PC-9 (cell line): ENCODE measurements at regions of chr12 and their contacts with region 1.

Region 1: GRCh38 chr12:59650402-59651228 is 54.8 kb downstream of the SLC16A7 start:
- DNase-seq: no peak
- H3K4me3 ChIP-seq: no peak overlapping the region
- H3K27ac ChIP-seq: no peak overlapping the region
- H3K4me1 ChIP-seq: no peaks in the 10 kb centered on the region; the same call in 1 of the 2 replicates
- H3K27me3 ChIP-seq: no peaks in the 10 kb centered on the region
- CTCF ChIP-seq: no peak

Region 2: GRCh38 chr12:57983146-57983857 is 1667.3 kb before region 1 on chr12:
- CTCF ChIA-PET with region 1: no interaction called
- POLR2A ChIA-PET with region 1: no interaction called
- intact Hi-C with region 1: no loop called
- DNase-seq: peak; percentile 44 to 48
- H3K4me3 ChIP-seq: no peak overlapping the region
- H3K27ac ChIP-seq: no peak overlapping the region
- H3K4me1 ChIP-seq: no peaks in the 10 kb centered on the region
- H3K27me3 ChIP-seq: no peaks in the 10 kb centered on the region
- CTCF ChIP-seq: peak; percentile 90

Region 3: DNA sequence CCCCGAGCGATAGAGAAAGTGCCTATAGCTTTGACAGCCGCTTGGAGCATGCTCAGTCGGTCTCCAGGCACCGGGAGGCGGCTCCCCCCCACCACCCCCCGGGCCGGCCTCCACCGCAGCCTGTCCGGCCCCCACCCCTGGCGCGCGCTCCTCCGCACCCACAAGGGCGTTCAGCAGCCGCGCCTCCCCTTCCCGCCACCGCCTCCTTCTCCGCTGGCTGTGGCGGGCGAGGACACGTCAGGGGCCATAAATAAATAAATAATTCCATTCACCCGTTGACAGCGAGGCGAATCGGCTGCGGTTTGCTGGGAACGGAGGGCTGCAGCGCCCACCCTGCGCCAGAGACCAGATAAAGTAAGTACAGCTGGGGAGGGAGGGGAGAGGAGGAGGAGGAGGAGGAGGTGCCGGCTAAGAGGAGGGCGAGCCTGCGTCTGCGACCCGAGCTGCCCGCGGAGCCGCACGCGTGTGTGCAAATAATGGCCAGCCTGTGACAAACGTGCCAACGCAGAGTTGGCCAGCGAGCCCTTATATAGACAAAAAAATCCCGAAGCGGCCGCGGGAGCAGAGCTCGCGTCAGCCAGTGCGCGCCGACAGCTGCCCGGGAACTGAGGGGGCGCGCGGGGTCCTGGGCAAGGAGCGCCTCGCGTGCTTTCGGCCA is 54.6 kb before region 1 on chr12 and contains the start of gene SLC16A7:
- CTCF ChIA-PET with region 1: no interaction called
- POLR2A ChIA-PET with region 1: no interaction called
- intact Hi-C with region 1: loop called (anchors 2 kb)
- DNase-seq: peak; percentile 36 to 73
- H3K4me3 ChIP-seq: peak within 1 kb of the TSS; percentile 66
- H3K27ac ChIP-seq: no peak within 1 kb of the TSS; the same call in 1 of the 2 replicates
- H3K4me1 ChIP-seq: peaks cover 10% of the 10 kb centered on the region; the same call in 1 of the 2 replicates
- H3K27me3 ChIP-seq: peaks cover 8% of the 10 kb centered on the region; the same call in 1 of the 2 replicates
- CTCF ChIP-seq: no peak
- total RNA-seq, gene SLC16A7: 2.7 and 5.0 TPM in 2 replicates

Region 4: DNA sequence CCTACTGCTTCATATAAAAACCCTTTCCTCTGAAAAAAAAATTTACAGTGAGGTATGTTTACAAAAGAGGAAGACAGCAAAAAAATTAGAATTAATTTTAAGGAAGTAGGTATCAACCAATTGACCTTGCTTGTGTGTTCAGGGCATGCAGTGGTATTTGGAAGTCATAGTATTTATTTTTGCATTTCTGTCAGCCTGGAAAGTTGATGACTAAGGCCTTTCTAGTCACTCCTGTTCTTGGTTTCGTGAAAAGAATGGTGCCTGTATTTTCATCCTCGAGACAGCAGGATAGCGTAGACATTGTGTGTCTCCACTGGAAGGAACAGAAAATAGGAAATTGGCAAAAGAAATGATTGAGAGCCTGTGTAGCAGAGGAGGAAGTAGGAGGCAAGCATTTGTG is 30.3 kb before region 1 on chr12:
- CTCF ChIA-PET with region 1: no interaction called
- POLR2A ChIA-PET with region 1: no interaction called
- intact Hi-C with region 1: no loop called
- DNase-seq: no peak
- H3K4me3 ChIP-seq: no peak overlapping the region
- H3K27ac ChIP-seq: no peak overlapping the region
- H3K4me1 ChIP-seq: no peaks in the 10 kb centered on the region
- H3K27me3 ChIP-seq: no peaks in the 10 kb centered on the region
- CTCF ChIP-seq: no peak